Heart right ventricle (tissue), 16 donors: ENCODE measurements at regions of chr4 and their contacts with region 1.

Region 1: GRCh38 chr4:57094832-57095223 is 15.4 kb downstream of the IGFBP7 start:
- DNase-seq: no peak
- ATAC-seq: peak in 2 of 8 donors; percentile 3 to 21
- H3K4me3 ChIP-seq: no peak overlapping the region
- H3K27ac ChIP-seq: peak overlapping the region; percentile 24 to 100 (median 53)
- H3K4me1 ChIP-seq: peaks cover 32 to 100% (median 98%) of the 10 kb centered on the region in 9 donors
- H3K27me3 ChIP-seq: no peaks in the 10 kb centered on the region
- CTCF ChIP-seq: no peak

Region 2: DNA sequence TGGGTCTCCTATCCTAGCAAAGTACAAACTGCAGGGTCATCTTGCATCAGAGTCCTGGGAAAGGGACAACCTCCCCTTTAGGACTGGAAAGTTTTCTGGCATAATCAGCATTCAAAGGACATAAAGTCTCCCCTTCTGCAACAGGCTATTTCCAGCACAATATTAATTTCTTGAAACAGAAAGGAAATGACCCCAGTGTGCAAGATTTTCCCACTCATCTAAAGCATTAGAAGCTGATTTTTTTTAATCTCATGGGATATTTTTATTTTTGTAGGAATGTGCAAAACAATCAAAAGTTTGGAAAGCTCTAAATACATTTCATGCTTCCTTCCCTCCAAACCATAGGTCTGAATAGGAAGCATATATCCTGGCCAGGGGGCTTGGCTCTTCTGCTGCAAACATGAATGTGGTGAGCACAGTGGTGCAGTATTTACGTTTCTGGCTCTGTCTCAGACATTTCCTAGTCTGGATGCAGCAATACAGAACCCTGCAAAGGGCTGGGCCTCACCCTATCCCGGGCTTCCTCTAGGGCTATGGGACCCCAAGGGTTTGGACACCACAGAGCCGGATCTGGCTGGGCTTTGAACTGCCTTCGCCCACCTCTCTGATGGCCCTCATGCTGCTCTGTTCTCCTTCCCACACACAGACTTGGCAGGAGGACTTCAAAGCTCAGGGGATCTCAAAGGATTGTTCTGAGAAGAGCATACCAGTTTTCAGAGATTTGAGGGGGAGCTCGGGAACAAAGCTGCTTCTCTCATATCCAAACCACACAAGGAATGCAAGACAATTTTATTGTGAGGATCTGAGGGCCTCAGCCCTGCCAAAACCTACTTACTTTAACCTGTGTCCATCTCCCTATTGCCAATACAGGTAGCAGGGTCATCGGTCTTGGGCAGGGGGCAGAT is 51.2 kb before region 1 on chr4:
- intact Hi-C with region 1: loop called in 2 of 10 experiments (anchors 5 kb)
- DNase-seq: peak in 1 of 2 donors; percentile 75
- ATAC-seq: peak; percentile 58 to 84 (median 73)
- H3K4me3 ChIP-seq: peak overlapping the region in 3 of 10 donors; percentile 5 to 10 (median 5)
- H3K27ac ChIP-seq: peak overlapping the region; percentile 48 to 93 (median 84)
- H3K4me1 ChIP-seq: peaks cover 18 to 100% (median 63%) of the 10 kb centered on the region in 9 donors
- H3K27me3 ChIP-seq: no peaks in the 10 kb centered on the region
- CTCF ChIP-seq: no peak